ENCODE measurements at regions of chr9 and their contacts with region 1.

Region 1: DNA sequence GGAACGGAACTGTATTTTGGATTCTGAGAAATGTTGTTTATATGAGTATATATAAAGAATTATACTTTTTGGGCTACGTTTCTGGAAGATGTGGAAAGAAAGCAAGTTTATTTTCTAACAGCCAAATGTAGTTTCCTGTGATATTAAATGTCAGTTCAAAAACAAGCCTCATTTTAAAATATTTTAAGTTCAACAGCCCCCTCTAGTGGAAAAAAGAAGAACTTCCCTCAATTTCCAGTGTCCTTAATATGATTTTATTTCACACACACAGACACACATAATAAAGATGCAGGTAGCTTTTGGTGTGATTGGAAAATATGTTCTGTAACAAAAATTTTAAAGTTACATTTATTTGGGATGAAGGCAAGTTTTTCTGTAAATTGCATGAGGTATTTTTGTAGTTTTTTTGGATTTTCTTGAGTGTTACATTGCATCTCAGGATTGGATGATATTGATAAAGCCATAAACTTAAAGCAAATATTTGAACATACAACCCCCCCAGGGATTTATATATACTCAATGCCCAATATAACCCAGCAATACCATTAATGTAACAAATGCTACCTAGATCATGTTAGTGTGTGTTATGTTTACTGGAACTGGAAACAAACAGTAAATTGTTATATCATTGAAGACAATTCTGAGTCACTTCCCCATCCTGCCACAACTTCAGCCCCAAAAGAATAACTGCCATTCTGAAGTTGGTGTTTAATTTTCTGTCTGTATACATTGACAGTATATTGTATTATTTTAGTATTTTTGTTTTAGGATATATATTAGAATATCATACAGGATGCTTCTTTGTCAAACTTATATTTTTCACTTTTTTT is 54.0 kb downstream of the CCDC171 start:
- DNase-seq: peak; percentile 19 to 36
- H3K4me3 ChIP-seq: no peak overlapping the region
- H3K4me1 ChIP-seq: no peaks in the 10 kb centered on the region
- H3K27me3 ChIP-seq: no peaks in the 10 kb centered on the region

Region 2: DNA sequence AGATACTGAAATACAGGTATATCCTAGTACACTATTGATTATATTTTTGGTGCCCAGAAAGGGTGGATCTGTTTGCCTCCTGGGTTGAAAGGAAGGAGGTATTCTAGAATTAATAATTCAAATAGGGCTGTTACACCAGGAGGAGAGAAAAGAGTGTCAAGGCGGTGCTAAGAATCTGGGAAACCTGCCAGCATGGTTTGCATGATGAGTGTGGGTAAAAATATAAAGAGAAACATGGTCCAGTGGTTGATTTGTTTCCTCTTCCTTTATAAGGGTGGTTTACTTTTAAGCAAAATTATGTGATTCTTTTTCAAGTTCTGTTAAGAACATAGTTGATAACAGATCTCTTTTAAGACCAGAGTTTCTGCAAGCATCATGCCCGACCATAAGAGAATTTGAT is 1223.6 kb before region 1 on chr9:
- in situ Hi-C with region 1: no loop called
- DNase-seq: no peak
- H3K4me3 ChIP-seq: no peak overlapping the region
- H3K4me1 ChIP-seq: no peaks in the 10 kb centered on the region
- H3K27me3 ChIP-seq: no peaks in the 10 kb centered on the region

Region 3: DNA sequence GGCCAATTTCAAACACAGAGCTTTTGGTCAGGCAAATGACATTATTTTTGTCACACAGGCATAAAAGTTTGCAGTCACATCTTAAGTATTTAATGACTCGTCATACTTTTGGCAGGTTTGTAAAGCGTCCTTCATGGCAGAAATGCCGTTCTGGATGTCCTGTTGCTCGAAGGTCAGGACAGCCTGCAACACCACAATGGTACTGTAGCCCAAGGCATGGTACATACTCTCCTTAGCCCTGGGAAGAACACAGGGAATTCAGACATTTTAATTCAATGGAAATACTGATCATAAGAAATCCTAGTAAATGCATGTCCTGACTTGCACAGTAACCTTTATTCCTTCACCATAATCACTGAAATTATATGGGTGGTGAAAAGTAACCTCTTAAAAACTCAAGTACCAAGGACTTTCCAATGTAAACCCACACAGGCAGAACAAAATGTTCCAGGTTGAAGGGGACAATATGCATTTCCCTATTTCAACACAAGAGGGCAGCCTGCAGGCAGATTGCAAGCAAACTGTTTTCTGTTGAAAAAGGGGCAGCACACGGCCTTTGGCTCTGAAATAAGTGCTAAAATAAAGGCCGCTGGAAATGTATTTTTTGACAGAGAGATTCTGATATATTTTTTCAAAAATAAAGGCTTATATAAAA is 395.6 kb before region 1 on chr9:
- in situ Hi-C with region 1: loop called (anchors 25 kb)
- DNase-seq: peak; percentile 49 to 79
- H3K4me3 ChIP-seq: no peak overlapping the region
- H3K4me1 ChIP-seq: no peaks in the 10 kb centered on the region
- H3K27me3 ChIP-seq: no peaks in the 10 kb centered on the region

Region 4: GRCh38 chr9:15306757-15307534 is 299.9 kb before region 1 on chr9 and contains the start of gene TTC39B:
- in situ Hi-C with region 1: loop called (anchors 25 kb)
- DNase-seq: peak; percentile 91 to 96
- H3K4me3 ChIP-seq: peak within 1 kb of the TSS; percentile 69
- H3K4me1 ChIP-seq: peaks cover 3% of the 10 kb centered on the region
- H3K27me3 ChIP-seq: no peaks in the 10 kb centered on the region

Region 5: DNA sequence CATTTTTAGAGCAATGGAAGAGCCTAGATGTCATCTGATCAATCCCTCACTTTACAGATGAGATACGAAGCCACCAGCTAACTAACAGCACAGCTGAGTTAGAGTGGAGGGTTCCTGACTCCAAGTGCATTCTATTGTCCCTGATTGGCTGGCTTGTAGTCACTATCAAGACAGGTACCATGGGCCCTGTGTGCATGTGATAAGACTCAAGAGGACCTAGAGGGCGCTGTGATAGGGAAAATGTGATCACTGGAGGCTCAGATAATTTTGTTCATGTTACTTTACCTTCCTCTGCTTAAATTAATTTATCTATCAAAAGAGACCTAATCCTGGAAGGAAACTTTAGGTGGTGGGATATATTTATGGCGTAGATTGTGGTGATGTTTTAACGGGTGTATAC is 203.7 kb before region 1 on chr9:
- in situ Hi-C with region 1: no loop called
- DNase-seq: peak in 1 of 2 experiments; percentile 50
- H3K4me3 ChIP-seq: no peak overlapping the region
- H3K4me1 ChIP-seq: no peaks in the 10 kb centered on the region
- H3K27me3 ChIP-seq: no peaks in the 10 kb centered on the region

Region 6: DNA sequence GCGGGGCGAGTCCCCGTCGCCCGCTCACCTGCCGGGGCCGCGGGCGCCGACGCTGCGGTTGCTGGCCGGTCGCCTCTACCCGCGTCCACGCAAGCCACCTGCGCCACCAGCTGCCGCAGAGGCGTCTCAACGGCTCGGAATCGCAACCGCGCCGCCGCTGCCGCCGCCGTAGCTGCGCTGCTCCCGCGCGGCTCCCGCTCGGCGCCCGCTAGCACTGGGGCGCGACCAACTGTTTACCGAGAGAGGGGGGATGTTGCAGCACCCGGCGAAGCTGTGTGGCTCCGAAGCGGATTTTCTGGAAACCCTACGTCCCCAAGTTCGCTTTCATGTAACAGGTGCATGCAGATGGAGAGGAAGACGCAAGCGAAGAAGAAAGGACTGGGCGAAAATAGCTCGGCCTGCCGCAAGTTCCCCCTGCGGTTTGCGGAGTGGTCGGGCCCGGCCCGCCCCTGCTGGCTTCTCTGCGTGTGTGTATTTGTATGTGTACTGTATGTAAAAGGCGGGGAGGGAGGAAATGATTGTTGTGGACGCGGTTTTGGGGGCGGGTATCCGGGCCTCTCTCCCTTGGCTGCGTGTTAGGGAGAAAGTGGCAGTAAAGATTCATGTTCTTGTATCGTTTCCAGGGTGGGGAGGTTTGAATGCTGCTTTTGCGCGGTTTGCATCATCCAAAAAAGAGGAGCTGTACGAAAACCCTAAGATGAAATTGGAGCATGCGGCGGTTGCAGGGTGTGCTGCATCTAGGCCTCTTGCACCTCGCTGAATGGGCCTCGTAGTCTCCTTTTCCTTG is 95.9 kb before region 1 on chr9 and contains the start of gene PSIP1:
- in situ Hi-C with region 1: loop called (anchors 25 kb)
- DNase-seq: peak; percentile 86
- H3K4me3 ChIP-seq: peak within 1 kb of the TSS; percentile 80
- H3K4me1 ChIP-seq: peaks cover 16% of the 10 kb centered on the region
- H3K27me3 ChIP-seq: no peaks in the 10 kb centered on the region